ENCODE measurements at regions of chr12 and their contacts with region 1.

Region 1: DNA sequence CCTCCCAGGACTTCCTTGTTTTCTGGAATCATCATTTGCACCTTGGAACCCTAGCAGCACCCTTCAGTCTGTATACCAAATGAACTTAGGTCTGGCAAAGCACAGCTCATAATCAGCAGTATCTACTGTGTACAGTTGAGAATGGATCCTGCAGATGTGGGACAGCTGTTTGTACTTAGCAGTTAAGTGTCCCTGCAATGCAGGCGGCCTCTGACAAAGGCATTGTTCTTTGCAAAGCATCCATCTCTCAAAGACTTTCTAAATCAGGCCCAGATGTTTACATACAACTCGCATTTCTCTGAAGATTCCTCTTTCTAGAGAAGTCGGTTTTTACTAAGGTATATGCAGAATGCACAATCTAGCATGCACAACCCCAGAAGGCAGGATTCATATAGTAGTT is 170.5 kb upstream of the RBM19 start:
- DNase-seq: no peak
- H3K4me3 ChIP-seq: no peak overlapping the region
- H3K27ac ChIP-seq: no peak overlapping the region
- H3K4me1 ChIP-seq: no peaks in the 10 kb centered on the region
- H3K27me3 ChIP-seq: peaks cover 0 to 8% of the 10 kb centered on the region in 2 donors
- CTCF ChIP-seq: no peak
- POLR2A ChIP-seq: no peak

Region 2: DNA sequence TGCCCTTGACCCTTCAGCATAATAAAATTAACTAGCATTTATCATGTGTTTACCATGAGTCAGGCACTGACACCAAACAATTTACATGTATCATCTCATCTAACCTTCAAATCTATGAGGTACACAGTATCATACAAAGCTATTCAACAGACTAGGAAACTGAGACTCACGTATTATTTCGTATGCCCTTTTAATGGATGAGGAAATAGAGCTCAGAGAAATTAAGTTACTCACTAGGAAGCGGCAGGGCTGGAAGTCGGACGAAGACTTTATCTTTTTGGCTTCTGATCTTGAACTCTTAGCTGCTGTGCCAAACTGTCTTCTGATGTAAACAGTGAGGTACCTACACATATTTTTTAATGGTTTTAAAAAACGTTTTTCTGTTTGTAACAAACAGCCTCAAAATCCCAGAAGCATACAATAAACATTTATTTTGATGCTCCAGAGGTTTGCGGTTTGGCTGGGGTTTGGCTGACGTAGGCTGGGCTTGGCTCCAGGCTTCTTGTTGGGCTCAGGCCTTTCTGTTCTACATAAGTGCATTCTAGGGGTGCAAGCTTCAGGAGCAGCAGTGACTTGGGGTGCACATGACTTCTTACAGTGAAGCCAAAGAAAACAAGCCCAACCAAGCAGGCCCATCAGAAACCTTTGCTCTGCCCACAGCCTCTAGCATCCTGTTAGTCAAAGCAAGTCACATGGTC is 84.7 kb after region 1 on chr12:
- intact Hi-C with region 1: loop called (anchors 2 kb)
- DNase-seq: no peak
- H3K4me3 ChIP-seq: no peak overlapping the region
- H3K27ac ChIP-seq: no peak overlapping the region
- H3K4me1 ChIP-seq: no peaks in the 10 kb centered on the region
- H3K27me3 ChIP-seq: peaks cover 0 to 15% of the 10 kb centered on the region in 2 donors
- CTCF ChIP-seq: no peak
- POLR2A ChIP-seq: no peak

Region 3: GRCh38 chr12:114721266-114721665 is 584.6 kb after region 1 on chr12:
- intact Hi-C with region 1: no loop called
- DNase-seq: no peak
- H3K4me3 ChIP-seq: no peak overlapping the region
- H3K27ac ChIP-seq: no peak overlapping the region
- H3K4me1 ChIP-seq: no peaks in the 10 kb centered on the region
- H3K27me3 ChIP-seq: no peaks in the 10 kb centered on the region
- CTCF ChIP-seq: no peak
- POLR2A ChIP-seq: no peak